H1 (cell line): ENCODE measurements at regions of chr20 and their contacts with region 1.

Region 1: GRCh38 chr20:50460460-50461267 is 49.5 kb upstream of the PTPN1 start:
- DNase-seq: peak in 1 of 2 experiments; percentile 99
- H3K4me3 ChIP-seq: no peak overlapping the region
- H3K27ac ChIP-seq: no peak overlapping the region
- H3K4me1 ChIP-seq: peaks cover 0 to 8% (median 2%) of the 10 kb centered on the region in 4 experiments; a peak in 5 of 7 replicates
- H3K27me3 ChIP-seq: no peaks in the 10 kb centered on the region
- CTCF ChIP-seq: peak; percentile 92 to 95 (median 93)
- EP300 ChIP-seq: no peak
- POLR2A ChIP-seq: no peak
- RAD21 ChIP-seq: peak; percentile 91

Region 2: GRCh38 chr20:50368813-50369224 is 91.8 kb before region 1 on chr20:
- CTCF ChIA-PET with region 1: interaction called, 10 read pairs
- POLR2A ChIA-PET with region 1: no interaction called
- DNase-seq: no peak
- H3K4me3 ChIP-seq: no peak overlapping the region
- H3K27ac ChIP-seq: no peak overlapping the region
- H3K4me1 ChIP-seq: peaks cover 0 to 3% (median 0%) of the 10 kb centered on the region in 4 experiments; a peak in 2 of 7 replicates
- H3K27me3 ChIP-seq: no peaks in the 10 kb centered on the region
- CTCF ChIP-seq: no peak
- EP300 ChIP-seq: no peak
- POLR2A ChIP-seq: no peak
- RAD21 ChIP-seq: no peak

Region 3: GRCh38 chr20:50398821-50399554 is 61.7 kb before region 1 on chr20:
- CTCF ChIA-PET with region 1: interaction called, 15 read pairs
- POLR2A ChIA-PET with region 1: no interaction called
- DNase-seq: no peak
- H3K4me3 ChIP-seq: no peak overlapping the region
- H3K27ac ChIP-seq: no peak overlapping the region
- H3K4me1 ChIP-seq: no peaks in the 10 kb centered on the region
- H3K27me3 ChIP-seq: no peaks in the 10 kb centered on the region
- CTCF ChIP-seq: no peak
- EP300 ChIP-seq: no peak
- POLR2A ChIP-seq: no peak
- RAD21 ChIP-seq: no peak